ENCODE measurements at regions of chr9 and their contacts with region 1.

Region 1: DNA sequence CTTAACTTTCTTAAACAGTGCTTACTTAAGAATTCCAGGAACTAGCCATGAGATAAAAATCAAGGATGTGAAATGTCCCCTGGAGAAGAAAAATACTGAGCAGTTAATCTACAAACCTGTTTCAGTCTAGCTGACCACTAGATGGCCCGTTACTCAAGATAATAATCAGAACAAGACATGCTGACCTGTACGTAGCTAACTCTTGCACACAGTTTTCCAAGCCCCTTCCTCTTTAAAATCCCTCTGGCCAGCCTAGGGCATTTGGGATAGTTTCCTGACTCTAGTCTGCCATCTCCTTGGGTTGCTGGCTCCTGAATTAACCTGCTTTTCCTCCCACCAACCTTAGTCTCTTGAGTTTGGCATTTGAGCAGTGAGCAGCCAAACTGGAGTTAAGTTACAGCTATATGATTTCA is 59.2 kb upstream of the TRAF1 start:
- DNase-seq: peak; percentile 39

Region 2: GRCh38 chr9:120875954-120876841 is 109.6 kb before region 1 on chr9:
- CTCF ChIA-PET with region 1: no interaction called
- POLR2A ChIA-PET with region 1: no interaction called
- DNase-seq: peak; percentile 65

Region 3: GRCh38 chr9:121059998-121060636 is 74.3 kb after region 1 on chr9:
- CTCF ChIA-PET with region 1: interaction called, 14 read pairs
- POLR2A ChIA-PET with region 1: interaction called, 4 read pairs
- DNase-seq: peak; percentile 59

Measured in HEK293T (cell line).